Left ventricle myocardium superior (tissue), 1 donor: ENCODE measurements at regions of chrX and their contacts with region 1.

Region 1: GRCh38 chrX:109856974-109857373 is 123.9 kb upstream of the ACSL4 start:
- DNase-seq: no peak
- ATAC-seq: no peak

Region 2: DNA sequence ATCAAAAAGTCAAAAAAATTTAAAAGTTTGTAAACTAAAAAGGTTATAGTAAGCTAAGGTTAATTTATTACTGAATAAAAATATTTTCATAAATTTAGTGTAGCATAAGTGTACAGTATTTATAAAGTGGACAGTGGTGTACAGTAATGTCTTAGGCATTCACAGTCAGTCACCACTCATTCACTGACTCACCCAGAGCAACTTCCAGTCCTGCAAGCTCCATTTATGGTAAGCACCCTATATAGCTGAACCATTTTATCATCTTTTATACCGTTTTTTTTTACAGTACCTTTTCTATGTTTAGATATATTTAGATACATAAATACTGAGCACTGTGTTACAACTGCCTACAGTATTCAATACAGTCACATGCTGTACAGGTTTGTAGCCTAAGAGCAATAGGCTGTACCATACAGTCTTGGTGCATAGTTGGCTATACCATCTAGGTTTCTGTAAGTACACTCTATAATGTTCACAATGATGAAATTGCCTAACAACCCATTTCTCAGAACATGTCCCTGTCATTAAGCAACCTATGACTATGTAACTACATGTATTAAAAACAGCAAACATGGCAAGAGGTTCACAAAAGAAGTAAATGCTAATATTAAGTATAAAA is 142.5 kb before region 1 on chrX:
- intact Hi-C with region 1: loop called (anchors 5 kb)
- DNase-seq: no peak
- ATAC-seq: no peak

Region 3: GRCh38 chrX:110087485-110088356 is 230.7 kb after region 1 on chrX:
- intact Hi-C with region 1: no loop called
- DNase-seq: no peak
- ATAC-seq: peak; percentile 62